Activated T-helper 2 cell treated with anti-CD3 and anti-CD28 coated beads, Interferon-gamma antibody, Interleukin-2, Interleukin-4, amounts not matched to agents 10 μg/mL and 5 μg/mL and 100 μg/mL, durations not matched to agents 14 hours and 24 hours and 36 hours (primary cell): ENCODE measurements at regions of chr10 and their contacts with region 1.

Region 1: DNA sequence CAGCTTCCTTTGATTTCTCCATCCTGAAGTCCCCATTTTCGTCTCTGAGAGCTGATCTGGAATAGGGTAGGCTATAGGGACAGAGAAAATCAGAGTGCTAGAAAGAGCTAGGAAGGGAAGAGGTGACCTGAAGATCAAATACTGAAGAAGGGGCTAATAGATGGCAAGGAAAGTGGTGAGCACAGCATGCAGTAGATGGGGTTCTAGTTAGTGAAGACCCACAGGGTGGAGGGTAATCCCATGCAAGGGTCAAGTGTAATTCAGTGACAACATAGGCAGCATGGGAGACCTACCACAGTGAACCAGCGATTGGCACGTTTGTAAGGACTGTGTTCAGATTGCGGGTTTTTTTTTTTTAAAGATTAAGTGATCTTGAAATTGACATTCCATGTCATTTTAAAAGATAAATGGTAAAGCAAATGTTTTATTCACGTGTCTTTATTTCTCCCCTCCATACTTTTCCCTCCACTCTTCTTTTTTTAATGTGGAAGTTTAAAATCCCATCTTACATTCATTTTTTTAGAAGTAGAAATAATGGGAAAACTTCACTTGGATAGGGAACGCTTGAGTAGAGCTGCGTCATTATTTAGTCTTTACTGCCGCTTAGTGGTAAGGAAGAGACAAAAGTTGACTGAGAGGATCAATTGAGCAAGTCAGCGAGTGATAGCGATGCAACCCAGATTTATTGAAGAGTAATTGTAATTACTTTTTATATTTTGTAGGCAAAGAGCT is 21.0 kb upstream of the ABI1 start:
- DNase-seq: no peak
- H3K4me3 Mint-ChIP-seq: no peak overlapping the region
- H3K27ac Mint-ChIP-seq: no peak overlapping the region
- H3K4me1 Mint-ChIP-seq: peaks cover 1% of the 10 kb centered on the region
- H3K27me3 Mint-ChIP-seq: peaks cover 33% of the 10 kb centered on the region

Region 2: GRCh38 chr10:26334932-26335573 is 546.7 kb before region 1 on chr10:
- intact Hi-C with region 1: loop called (anchors 1 kb)
- DNase-seq: peak; percentile 51
- H3K4me3 Mint-ChIP-seq: peak overlapping the region; percentile 71
- H3K27ac Mint-ChIP-seq: peak overlapping the region; percentile 64
- H3K4me1 Mint-ChIP-seq: peaks cover 7% of the 10 kb centered on the region
- H3K27me3 Mint-ChIP-seq: peaks cover 6% of the 10 kb centered on the region

Region 3: DNA sequence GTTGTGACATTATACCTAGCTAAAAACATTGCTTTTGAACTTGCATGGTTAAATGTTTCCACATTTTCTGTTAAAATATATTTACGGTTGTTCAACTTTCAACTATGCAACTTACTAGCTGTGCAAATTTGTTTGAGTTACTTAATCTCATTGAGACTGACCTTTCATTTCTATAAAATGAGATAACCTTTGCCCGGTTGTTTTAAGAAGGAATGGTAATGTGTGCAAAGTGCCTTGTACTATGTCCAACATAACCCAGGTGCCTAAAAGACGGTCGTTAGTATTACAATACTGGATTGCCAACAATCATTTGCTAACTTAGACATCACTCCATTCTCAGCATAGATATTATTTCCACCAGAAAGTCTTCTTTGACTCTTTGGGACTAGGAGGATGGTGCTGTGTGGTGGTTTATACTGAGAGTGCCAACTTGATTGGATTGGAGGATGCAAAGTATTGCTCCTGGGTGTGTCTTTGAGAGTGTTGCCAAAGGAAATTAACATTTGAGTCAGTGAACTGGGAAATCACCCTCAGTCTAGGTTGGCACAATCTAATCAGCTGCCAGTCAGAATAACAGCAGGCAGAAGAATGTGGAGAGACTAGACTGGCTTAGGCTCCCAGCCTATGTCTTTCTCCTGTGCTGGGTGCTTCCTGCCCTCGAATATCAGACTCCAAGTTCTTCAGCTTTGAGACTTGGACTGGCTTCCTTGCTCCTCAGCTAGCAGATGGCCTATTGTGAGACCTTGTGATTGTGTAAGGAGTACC is 269.4 kb before region 1 on chr10:
- intact Hi-C with region 1: loop called (anchors 2 kb)
- DNase-seq: no peak
- H3K4me3 Mint-ChIP-seq: no peak overlapping the region
- H3K27ac Mint-ChIP-seq: no peak overlapping the region
- H3K4me1 Mint-ChIP-seq: peaks cover 4% of the 10 kb centered on the region
- H3K27me3 Mint-ChIP-seq: peaks cover 9% of the 10 kb centered on the region

Region 4: DNA sequence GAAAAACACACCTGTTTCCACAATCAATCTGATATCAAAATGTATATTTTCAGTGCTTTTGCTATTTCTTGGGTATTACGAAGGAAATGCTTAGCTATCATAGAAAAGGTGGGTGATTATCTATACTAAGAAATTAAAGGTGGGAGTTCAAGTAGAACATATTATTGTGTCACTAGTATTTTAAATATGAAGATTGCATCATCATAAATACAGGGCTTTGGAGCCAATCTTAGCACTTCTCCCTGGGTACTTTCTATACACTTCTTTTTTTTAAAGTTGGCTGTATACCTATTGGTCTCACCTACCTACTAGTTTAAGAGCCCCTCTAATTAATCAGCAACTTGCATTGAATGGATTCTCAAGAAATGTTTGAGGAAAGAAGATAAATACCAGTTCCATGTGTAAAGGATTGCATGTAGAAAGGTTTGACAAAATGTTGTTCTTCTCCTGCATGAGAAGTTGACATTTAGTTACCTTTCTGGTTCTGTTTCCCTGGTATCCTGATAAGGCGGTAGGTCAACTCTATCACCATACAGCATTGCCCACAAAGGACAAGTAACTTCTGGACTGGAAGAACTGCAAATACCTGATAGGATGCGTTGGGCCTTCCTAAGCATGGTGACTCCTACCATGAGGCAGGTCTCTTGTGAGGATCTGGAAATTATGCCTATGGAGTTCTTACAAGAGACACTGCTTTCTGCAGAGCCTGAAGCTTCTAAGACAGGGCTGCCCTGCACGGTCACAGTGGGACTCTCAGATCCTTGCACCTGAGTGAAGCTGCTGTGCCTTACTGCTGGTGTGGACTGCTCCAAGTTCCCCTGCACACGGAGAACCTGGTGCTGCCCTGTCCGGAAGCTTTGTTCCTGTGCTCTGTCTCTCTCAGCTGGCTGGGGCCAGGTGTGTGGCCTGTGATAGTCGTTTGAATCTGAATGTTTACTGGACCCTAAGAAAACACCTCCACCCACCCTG is 216.4 kb before region 1 on chr10:
- intact Hi-C with region 1: no loop called
- DNase-seq: no peak
- H3K4me3 Mint-ChIP-seq: no peak overlapping the region
- H3K27ac Mint-ChIP-seq: no peak overlapping the region
- H3K4me1 Mint-ChIP-seq: no peaks in the 10 kb centered on the region
- H3K27me3 Mint-ChIP-seq: peaks cover 5% of the 10 kb centered on the region

Region 5: GRCh38 chr10:26685441-26685840 is 196.3 kb before region 1 on chr10:
- intact Hi-C with region 1: loop called (anchors 2 kb)
- DNase-seq: no peak
- H3K4me3 Mint-ChIP-seq: no peak overlapping the region
- H3K27ac Mint-ChIP-seq: no peak overlapping the region
- H3K4me1 Mint-ChIP-seq: peaks cover 7% of the 10 kb centered on the region
- H3K27me3 Mint-ChIP-seq: peaks cover 9% of the 10 kb centered on the region

Region 6: DNA sequence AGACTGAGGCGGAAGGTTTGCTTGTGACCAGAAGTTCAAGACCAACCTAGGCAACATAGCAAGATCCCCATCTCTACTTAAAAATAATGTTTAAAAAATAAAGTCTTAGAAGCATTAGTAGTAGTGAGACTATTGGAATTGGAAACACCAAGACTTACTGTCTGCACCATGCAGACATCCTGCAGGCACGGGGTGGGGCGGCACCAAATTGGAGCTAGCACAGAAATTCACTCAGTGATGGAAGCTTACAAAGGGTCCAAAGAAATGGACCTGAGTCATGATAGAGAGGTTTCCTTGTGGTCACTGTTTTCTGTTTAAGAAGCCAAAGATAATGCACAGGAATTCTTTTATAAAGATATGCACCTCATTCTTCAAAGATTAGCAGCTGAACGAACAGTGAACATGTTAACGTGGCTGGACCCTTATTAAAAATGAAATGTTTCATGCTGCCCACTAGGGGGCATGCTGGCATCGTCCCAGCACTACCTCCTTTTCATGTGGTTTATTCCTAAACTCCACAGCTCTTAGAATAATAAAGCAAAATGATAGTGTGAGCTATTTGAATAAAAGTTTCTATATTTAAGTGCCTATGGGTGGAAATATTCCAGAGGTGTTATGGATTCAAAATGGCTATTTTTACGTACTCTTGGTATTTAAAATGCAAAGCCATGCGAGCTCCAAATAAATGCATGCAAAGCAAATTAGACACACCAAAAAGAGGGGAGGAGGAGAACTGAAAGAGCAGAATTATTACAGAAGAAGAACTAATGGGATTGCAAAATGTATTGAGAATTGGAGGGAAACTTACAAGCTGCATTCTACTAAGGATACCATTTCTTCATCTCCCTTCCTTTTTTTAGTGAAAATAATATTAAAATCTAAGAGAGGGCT is 155.7 kb before region 1 on chr10:
- intact Hi-C with region 1: loop called (anchors 1 kb)
- DNase-seq: no peak
- H3K4me3 Mint-ChIP-seq: no peak overlapping the region
- H3K27ac Mint-ChIP-seq: peak overlapping the region; percentile 25
- H3K4me1 Mint-ChIP-seq: peaks cover 14% of the 10 kb centered on the region
- H3K27me3 Mint-ChIP-seq: no peaks in the 10 kb centered on the region

Region 7: DNA sequence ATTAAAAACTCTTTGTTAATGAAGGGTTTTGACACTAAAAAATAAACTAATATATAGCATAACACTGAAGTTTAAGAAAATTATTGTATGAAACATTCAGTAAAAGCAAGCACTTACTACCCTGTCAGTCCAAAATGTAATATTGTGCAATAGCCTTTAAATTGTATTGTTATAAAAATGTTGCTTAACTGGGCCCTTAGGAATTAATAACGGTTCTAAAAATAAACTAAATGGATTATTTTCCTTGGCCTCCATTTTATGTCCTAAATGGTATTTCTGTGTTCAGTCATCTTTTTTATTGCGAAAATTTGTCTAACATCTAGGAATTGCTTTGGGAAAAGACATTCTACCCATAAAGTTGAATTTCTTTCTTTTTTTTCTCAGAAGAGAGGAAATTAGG is 28.0 kb after region 1 on chr10:
- intact Hi-C with region 1: no loop called
- DNase-seq: no peak
- H3K4me3 Mint-ChIP-seq: no peak overlapping the region
- H3K27ac Mint-ChIP-seq: no peak overlapping the region
- H3K4me1 Mint-ChIP-seq: no peaks in the 10 kb centered on the region
- H3K27me3 Mint-ChIP-seq: peaks cover 3% of the 10 kb centered on the region